GM23248 (cell line): ENCODE measurements at regions of chr6 and their contacts with region 1.

Region 1: GRCh38 chr6:8137529-8137939 is 35.2 kb upstream of the EEF1E1 start:
- DNase-seq: no peak
- H3K4me3 ChIP-seq: no peak overlapping the region
- H3K27ac ChIP-seq: no peak overlapping the region
- H3K4me1 ChIP-seq: no peaks in the 10 kb centered on the region
- H3K27me3 ChIP-seq: 0 out of 2 replicates have a peak, but pooled peaks cover 4% of the 10 kb centered on the region

Region 2: GRCh38 chr6:8219352-8219943 is 81.9 kb after region 1 on chr6:
- in situ Hi-C with region 1: loop called (anchors 5 kb)
- DNase-seq: peak; percentile 70
- H3K4me3 ChIP-seq: peak overlapping the region; percentile 5; the same call in 1 of the 2 replicates
- H3K27ac ChIP-seq: no peak overlapping the region
- H3K4me1 ChIP-seq: no peaks in the 10 kb centered on the region
- H3K27me3 ChIP-seq: no peaks in the 10 kb centered on the region

Region 3: DNA sequence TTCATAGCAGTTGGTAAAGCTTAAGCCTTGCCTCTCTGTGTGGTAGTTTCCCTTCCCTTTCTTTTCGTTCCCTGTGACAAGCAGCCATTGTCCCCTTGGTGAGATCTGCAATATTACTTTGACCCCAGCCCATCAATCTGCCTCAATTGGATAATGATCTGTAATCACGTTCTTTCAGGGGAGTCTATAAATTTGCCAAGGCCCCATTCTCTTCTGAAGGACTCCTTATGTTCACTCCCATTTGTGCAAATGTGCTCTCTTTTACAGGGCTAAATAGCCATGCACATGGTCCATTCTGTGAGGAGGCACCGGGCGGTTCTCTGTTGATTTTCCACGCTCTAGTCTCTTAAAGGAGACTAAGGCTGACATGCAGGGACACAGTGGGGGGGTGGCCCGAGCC is 958.2 kb after region 1 on chr6:
- in situ Hi-C with region 1: no loop called
- DNase-seq: no peak
- H3K4me3 ChIP-seq: no peak overlapping the region
- H3K27ac ChIP-seq: no peak overlapping the region
- H3K4me1 ChIP-seq: no peaks in the 10 kb centered on the region
- H3K27me3 ChIP-seq: no peaks in the 10 kb centered on the region